ENCODE measurements at regions of chr19 and their contacts with region 1.

Region 1: DNA sequence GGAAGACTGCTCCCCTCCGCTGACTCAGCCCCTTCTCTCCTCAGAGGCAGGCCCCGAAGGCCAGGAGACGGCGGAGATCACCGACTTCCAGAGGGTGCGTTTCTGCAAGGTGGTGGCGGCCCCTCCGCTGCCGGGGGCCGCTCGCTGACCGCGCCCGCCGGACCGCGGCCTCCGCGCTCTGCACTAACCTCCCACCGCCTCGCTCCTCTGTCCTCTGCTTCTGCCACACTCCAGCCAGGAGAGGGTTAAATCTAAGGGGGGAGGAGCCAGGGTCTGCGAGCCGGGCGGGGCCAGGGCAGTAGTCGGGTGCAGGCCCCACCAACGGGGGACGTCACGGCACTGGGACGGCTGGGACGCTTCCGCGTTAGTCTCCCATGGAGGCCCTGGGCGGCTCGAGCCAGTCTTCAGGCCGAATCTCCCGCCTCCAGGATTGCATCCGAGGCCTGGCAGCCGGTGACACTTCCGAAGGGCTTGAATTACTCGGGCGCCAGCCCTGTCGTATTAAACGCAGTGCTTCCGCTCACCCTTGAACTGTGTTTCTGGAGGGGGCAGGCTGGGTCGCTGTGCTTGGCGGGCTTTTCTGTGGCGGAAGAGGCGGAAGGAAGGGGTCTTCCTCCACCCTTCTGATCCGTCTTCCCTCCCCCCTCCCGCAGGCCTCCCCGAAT is 1.2 kb upstream of the INAFM1 start:
- DNase-seq: peak; percentile 98
- H3K4me3 ChIP-seq: peak overlapping the region; percentile 59 to 87
- H3K27ac ChIP-seq: peak overlapping the region; percentile 84 to 97
- H3K4me1 ChIP-seq: peaks cover 10 to 18% of the 10 kb centered on the region in 2 experiments; a peak in 3 of 4 replicates
- H3K27me3 ChIP-seq: no peaks in the 10 kb centered on the region
- CTCF ChIP-seq: no peak
- EP300 ChIP-seq: no peak
- RAD21 ChIP-seq: peak; percentile 13; the same call in 1 of the 2 replicates

Region 2: GRCh38 chr19:47130591-47131227 is 142.7 kb before region 1 on chr19 and contains the start of gene SAE1:
- CTCF ChIA-PET with region 1: no interaction called
- POLR2A ChIA-PET with region 1: no interaction called
- DNase-seq: peak; percentile 97
- H3K4me3 ChIP-seq: peak within 1 kb of the TSS; percentile 62 to 80
- H3K27ac ChIP-seq: peak within 1 kb of the TSS; percentile 78 to 80
- H3K4me1 ChIP-seq: peaks cover 2 to 18% of the 10 kb centered on the region in 2 experiments; a peak in 3 of 4 replicates
- H3K27me3 ChIP-seq: no peaks in the 10 kb centered on the region
- CTCF ChIP-seq: peak; percentile 51
- EP300 ChIP-seq: peak in 1 of 2 experiments; percentile 6; a peak in 1 of 4 replicates
- RAD21 ChIP-seq: peak; percentile 37; the same call in 1 of the 2 replicates
- polyA plus RNA-seq, gene SAE1: 123 and 126 TPM in 2 replicates

Region 3: DNA sequence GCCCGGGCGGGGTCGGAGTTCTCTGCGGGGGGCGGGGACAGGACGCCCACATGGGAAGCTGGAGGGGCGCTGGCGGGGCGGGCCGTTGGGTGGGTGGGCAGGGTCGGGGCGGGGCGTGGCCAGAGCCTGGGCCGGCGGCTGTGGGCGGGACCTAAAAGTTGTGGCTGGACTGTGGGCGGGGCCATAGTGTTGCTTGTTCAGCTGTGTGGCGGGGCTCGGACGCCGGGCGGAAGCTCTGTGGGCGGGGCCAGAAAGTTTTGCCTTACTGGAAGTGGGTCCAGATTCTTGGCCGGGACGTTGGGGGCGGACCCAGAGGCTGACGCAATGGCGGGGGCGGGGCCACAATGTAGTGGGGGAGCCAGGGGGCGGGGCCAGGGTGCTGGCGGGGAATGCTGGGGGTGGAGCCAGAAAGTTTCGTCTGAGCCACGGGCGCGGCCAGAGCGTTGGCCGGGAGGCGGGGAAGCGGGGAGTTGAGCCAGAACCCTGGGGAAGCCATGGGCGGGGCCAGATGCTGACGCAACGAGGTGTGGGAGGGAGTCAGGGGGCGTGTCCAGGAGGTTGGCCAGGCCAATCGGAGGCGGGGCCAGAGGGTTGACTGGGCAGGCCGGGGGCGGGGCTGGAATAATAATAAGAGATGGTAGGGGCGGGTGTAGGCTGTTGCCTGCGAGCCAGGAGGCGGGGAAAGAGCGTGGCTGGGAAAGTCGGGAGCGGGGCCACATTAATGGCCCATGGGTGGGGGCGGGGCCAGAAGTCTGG is 16.6 kb before region 1 on chr19:
- CTCF ChIA-PET with region 1: interaction called, 3 read pairs
- POLR2A ChIA-PET with region 1: interaction called, 18 read pairs
- DNase-seq: peak; percentile 97
- H3K4me3 ChIP-seq: peak overlapping the region; percentile 69 to 72
- H3K27ac ChIP-seq: peak overlapping the region; percentile 94
- H3K4me1 ChIP-seq: peaks cover 9 to 13% of the 10 kb centered on the region in 2 experiments; a peak in 2 of 4 replicates
- H3K27me3 ChIP-seq: no peaks in the 10 kb centered on the region
- CTCF ChIP-seq: no peak
- EP300 ChIP-seq: no peak
- RAD21 ChIP-seq: no peak

Region 4: DNA sequence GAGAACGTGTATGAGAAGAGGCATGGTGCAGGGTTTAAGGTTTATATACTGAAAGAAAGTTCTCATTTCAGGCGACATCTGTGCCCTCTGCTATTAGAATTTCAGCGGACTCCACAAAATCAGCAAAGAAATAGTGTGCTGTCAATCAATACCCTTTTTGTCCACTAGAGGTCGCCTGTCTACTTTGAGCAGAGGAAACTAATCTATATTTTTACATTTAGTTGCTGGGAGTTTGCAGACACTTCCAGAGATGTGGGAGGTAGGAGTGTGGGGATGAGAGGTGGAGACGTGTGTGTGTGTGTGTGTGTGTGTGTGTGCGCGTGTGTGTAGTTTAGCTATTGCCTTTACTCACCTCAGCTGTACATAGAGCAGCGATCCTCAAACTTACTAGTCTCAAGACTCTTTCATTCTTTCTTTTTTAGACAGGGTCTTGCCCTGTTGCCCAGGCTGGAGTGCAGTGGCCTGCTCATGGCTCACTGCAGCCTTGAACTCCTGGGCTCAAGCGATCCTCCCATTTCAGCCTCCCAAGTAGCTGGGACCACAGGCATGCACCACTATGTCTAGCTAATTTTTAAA is 11.0 kb after region 1 on chr19:
- CTCF ChIA-PET with region 1: interaction called, 34 read pairs
- POLR2A ChIA-PET with region 1: no interaction called
- DNase-seq: peak; percentile 56
- H3K4me3 ChIP-seq: no peak overlapping the region
- H3K27ac ChIP-seq: no peak overlapping the region
- H3K4me1 ChIP-seq: peaks cover 0 to 8% of the 10 kb centered on the region in 2 experiments; a peak in 2 of 4 replicates
- H3K27me3 ChIP-seq: no peaks in the 10 kb centered on the region
- CTCF ChIP-seq: peak; percentile 88
- EP300 ChIP-seq: no peak
- RAD21 ChIP-seq: peak; percentile 66

Region 5: DNA sequence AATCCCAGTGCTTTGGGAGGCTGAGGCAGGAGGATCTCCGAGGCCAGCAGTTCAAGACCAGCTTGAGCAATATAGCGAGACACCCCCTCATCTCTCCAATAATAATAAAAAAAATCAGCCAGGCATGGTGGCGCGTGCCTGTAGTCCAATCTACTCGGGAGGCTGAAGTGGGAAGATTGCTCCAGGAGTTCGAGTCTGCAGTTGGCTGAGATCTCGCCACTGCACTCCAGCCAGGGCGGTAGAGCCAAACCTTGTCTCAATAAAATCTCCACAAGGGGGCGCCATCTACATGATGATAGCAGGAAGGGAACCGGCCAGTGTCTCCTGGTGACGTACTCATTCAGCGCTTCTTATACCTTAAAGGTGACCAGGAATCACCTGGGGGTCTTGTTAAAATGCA is 22.6 kb after region 1 on chr19:
- CTCF ChIA-PET with region 1: interaction called, 14 read pairs
- POLR2A ChIA-PET with region 1: no interaction called
- DNase-seq: peak; percentile 78
- H3K4me3 ChIP-seq: peak overlapping the region in 1 of 2 experiments; percentile 23; a peak in 1 of 4 replicates
- H3K27ac ChIP-seq: no peak overlapping the region
- H3K4me1 ChIP-seq: no peaks in the 10 kb centered on the region
- H3K27me3 ChIP-seq: no peaks in the 10 kb centered on the region
- CTCF ChIP-seq: peak; percentile 78
- EP300 ChIP-seq: no peak
- RAD21 ChIP-seq: peak; percentile 91

Region 6: GRCh38 chr19:47377208-47377701 is 103.8 kb after region 1 on chr19:
- CTCF ChIA-PET with region 1: no interaction called
- POLR2A ChIA-PET with region 1: no interaction called
- DNase-seq: peak; percentile 25
- H3K4me3 ChIP-seq: no peak overlapping the region
- H3K27ac ChIP-seq: no peak overlapping the region
- H3K4me1 ChIP-seq: no peaks in the 10 kb centered on the region
- H3K27me3 ChIP-seq: no peaks in the 10 kb centered on the region
- CTCF ChIP-seq: no peak
- EP300 ChIP-seq: no peak
- RAD21 ChIP-seq: no peak

Region 7: DNA sequence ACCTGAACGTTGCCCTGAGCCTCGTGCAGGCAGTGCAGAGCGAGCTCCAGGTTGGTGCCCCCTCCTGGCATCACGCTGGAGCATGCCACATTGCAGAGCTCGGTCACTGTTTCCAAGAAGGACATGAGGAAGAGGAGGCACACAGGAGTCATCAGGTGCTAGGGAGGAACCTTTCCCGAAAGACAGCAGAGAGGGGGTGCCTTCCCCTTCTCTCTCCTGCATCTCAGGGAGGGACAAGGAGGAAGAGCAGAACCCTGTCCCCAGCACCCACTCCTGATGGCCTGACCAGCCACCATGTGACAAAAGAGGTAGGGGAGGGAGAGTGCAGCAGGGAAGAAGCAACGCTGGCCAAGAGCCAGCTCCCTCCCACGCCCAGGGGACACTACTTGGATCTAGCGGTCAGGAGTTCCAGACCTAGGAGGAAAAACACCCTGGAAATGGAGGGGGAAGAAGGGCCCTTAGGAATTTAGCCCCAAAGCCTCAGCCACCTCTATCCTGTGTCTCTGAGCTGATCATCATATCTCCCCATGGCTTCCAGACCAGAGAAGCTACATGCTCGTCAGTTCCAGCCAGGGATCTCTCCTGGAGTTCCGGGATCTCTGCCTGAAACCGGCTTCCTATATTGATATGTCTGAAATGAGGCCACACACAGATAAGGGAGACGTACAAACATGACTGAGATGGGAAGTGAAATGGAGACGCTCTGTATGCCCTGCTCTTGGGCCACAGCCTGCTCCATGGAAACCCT is 258.4 kb after region 1 on chr19:
- CTCF ChIA-PET with region 1: no interaction called
- POLR2A ChIA-PET with region 1: no interaction called
- DNase-seq: no peak
- H3K4me3 ChIP-seq: no peak overlapping the region
- H3K27ac ChIP-seq: no peak overlapping the region
- H3K4me1 ChIP-seq: peaks cover 0 to 4% of the 10 kb centered on the region in 2 experiments; a peak in 1 of 4 replicates
- H3K27me3 ChIP-seq: no peaks in the 10 kb centered on the region
- CTCF ChIP-seq: no peak
- EP300 ChIP-seq: no peak
- RAD21 ChIP-seq: no peak